CD4-positive, alpha-beta T cell (primary cell): ENCODE measurements at regions of chr2 and their contacts with region 1.

Region 1: GRCh38 chr2:99888617-99889016 is 253.8 kb downstream of the AFF3 start:
- DNase-seq: no peak
- ATAC-seq: no peak
- H3K4me3 ChIP-seq: no peak overlapping the region
- H3K4me3 Mint-ChIP-seq: no peak overlapping the region
- H3K27ac ChIP-seq: no peak overlapping the region
- H3K27ac Mint-ChIP-seq: no peak overlapping the region
- H3K4me1 ChIP-seq: no peaks in the 10 kb centered on the region
- H3K4me1 Mint-ChIP-seq: no peaks in the 10 kb centered on the region
- H3K27me3 ChIP-seq: no peaks in the 10 kb centered on the region
- H3K27me3 Mint-ChIP-seq: no peaks in the 10 kb centered on the region
- CTCF ChIP-seq: no peak

Region 2: DNA sequence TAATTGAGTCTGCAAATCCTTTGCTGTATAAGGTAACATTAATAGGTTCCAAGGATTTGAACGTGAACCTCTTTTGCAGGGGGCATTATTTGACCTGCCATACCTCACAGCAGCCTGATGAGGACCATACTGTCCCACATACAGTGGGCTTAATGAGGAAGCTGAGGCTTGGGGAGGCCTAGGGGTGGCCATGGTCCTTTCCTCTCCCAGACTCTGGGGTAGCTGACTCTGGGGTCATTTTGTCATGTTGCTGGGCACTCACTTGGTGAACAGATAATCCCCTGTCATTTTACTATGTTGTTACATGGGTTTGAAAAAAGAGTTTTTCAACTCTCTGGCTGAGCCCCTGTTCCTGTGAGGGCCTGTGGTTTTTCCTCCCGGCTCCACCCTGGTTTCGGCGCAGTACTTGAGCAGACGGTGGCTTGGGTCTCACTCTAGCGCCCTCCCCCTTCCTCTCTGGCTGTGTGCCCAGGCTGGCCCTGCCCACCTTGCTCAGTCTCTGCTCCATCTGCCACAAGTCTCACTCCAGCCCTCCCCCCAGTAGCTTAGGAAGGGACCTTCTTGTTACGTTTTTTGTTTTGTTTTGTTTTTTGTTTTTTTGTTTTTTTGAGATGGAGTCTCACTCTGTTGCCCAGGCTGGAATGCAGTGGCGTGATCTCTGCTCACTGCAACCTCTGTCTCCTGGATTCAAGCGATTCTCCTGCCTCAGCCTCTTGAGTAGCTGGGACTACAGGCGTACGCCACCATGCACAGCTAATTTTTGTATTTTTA is 1423.0 kb before region 1 on chr2:
- CTCF ChIA-PET with region 1: no interaction called
- POLR2A ChIA-PET with region 1: no interaction called
- intact Hi-C with region 1: no loop called
- DNase-seq: peak; percentile 62 to 94 (median 89)
- ATAC-seq: peak; percentile 71
- H3K4me3 ChIP-seq: peak overlapping the region; percentile 40
- H3K4me3 Mint-ChIP-seq: peak overlapping the region; percentile 89
- H3K27ac ChIP-seq: peak overlapping the region; percentile 79 to 87
- H3K27ac Mint-ChIP-seq: peak overlapping the region; percentile 95
- H3K4me1 ChIP-seq: peaks cover 95% of the 10 kb centered on the region
- H3K4me1 Mint-ChIP-seq: peaks cover 90% of the 10 kb centered on the region
- H3K27me3 ChIP-seq: no peaks in the 10 kb centered on the region
- H3K27me3 Mint-ChIP-seq: no peaks in the 10 kb centered on the region
- CTCF ChIP-seq: no peak

Region 3: DNA sequence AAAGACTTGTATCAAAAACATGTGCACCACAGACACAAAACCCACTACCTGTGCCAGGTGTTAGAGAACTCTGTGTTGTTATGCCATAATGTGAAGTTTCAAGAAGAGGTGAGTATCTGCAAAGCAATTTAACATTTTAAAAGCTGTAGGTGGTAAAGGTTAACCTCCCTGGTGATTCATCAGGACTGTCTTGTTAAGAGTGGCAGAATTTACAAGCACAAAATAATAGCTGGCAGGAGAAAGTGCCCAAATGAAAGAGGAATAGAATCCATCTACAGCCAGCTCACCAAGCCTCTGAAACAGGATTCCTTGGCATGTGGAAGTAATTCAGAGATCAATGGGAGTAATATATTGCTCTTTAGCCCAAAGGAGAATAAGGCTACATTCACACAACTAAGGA is 23.1 kb after region 1 on chr2:
- CTCF ChIA-PET with region 1: no interaction called
- POLR2A ChIA-PET with region 1: no interaction called
- intact Hi-C with region 1: loop called in 1 of 2 experiments (anchors 1 kb)
- DNase-seq: no peak
- ATAC-seq: no peak
- H3K4me3 ChIP-seq: no peak overlapping the region
- H3K4me3 Mint-ChIP-seq: no peak overlapping the region
- H3K27ac ChIP-seq: no peak overlapping the region
- H3K27ac Mint-ChIP-seq: no peak overlapping the region
- H3K4me1 ChIP-seq: no peaks in the 10 kb centered on the region
- H3K4me1 Mint-ChIP-seq: no peaks in the 10 kb centered on the region
- H3K27me3 ChIP-seq: no peaks in the 10 kb centered on the region
- H3K27me3 Mint-ChIP-seq: no peaks in the 10 kb centered on the region
- CTCF ChIP-seq: no peak